ENCODE measurements at regions of chr5 and their contacts with region 1.

Region 1: DNA sequence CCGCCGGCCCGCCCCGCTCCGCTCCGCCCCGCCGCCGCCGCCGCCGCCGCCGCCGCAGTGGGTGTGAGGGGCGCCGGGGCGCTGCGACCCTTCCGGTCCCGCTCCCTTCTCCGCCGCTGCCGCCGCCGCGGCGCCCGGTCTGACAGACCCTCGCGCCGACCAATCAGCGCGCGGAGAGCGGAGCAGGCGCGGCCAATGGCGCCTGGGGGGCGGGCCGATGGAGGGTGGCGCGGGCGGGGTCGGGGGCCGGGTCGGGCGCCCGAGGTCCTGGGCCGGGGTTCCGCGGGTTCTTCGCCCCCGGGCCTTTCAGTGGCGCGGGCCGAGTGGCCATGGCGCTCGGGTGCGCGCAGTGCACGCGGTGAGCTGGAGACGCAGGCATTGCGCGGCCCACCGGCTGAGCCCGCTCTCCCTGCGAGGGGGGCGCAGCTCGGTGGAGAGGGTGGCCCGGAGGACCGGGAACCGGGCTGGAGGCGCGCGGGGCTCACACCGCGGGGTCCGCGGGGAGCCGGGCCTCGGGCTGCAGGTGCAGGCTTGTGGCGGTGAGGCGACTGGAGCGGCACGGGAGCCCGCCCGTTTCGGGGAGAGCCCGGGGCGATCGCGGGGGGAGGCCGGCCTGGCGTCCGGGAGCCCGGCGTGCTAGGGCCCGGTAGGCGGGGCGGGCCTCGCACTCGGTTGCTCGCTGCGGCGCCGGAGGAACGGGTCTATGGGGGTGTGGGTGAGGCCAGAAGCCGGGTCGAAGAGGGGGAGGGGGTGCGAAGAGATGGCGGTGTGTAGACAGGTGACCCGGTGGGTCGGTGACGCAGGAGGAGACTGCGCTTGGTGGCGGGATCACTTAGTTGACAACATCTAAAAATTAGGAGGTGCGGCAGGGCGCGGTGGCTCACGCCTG is at the start of gene MAPK9:
- DNase-seq: peak; percentile 87
- H3K4me3 Mint-ChIP-seq: peak within 1 kb of the TSS; percentile 92
- H3K27ac Mint-ChIP-seq: peak within 1 kb of the TSS; percentile 92
- H3K4me1 Mint-ChIP-seq: peaks cover 29% of the 10 kb centered on the region
- H3K27me3 Mint-ChIP-seq: no peaks in the 10 kb centered on the region
- total RNA-seq, gene MAPK9: 41.7 to 43.2 TPM

Region 2: GRCh38 chr5:179559284-179560252 is 732.6 kb before region 1 on chr5:
- CTCF ChIA-PET with region 1: no interaction called
- POLR2A ChIA-PET with region 1: no interaction called
- intact Hi-C with region 1: loop called (anchors 10 kb)
- DNase-seq: peak; percentile 97
- H3K4me3 Mint-ChIP-seq: peak overlapping the region; percentile 85
- H3K27ac Mint-ChIP-seq: peak overlapping the region; percentile 86
- H3K4me1 Mint-ChIP-seq: peaks cover 17% of the 10 kb centered on the region
- H3K27me3 Mint-ChIP-seq: no peaks in the 10 kb centered on the region

Region 3: GRCh38 chr5:180315762-180316212 is 23.6 kb after region 1 on chr5:
- CTCF ChIA-PET with region 1: interaction called, 155 read pairs
- POLR2A ChIA-PET with region 1: interaction called, 7 read pairs
- intact Hi-C with region 1: loop called (anchors 1 kb)
- DNase-seq: peak; percentile 82
- H3K4me3 Mint-ChIP-seq: peak overlapping the region; percentile 20
- H3K27ac Mint-ChIP-seq: peak overlapping the region; percentile 18
- H3K4me1 Mint-ChIP-seq: peaks cover 2% of the 10 kb centered on the region
- H3K27me3 Mint-ChIP-seq: no peaks in the 10 kb centered on the region

Region 4: DNA sequence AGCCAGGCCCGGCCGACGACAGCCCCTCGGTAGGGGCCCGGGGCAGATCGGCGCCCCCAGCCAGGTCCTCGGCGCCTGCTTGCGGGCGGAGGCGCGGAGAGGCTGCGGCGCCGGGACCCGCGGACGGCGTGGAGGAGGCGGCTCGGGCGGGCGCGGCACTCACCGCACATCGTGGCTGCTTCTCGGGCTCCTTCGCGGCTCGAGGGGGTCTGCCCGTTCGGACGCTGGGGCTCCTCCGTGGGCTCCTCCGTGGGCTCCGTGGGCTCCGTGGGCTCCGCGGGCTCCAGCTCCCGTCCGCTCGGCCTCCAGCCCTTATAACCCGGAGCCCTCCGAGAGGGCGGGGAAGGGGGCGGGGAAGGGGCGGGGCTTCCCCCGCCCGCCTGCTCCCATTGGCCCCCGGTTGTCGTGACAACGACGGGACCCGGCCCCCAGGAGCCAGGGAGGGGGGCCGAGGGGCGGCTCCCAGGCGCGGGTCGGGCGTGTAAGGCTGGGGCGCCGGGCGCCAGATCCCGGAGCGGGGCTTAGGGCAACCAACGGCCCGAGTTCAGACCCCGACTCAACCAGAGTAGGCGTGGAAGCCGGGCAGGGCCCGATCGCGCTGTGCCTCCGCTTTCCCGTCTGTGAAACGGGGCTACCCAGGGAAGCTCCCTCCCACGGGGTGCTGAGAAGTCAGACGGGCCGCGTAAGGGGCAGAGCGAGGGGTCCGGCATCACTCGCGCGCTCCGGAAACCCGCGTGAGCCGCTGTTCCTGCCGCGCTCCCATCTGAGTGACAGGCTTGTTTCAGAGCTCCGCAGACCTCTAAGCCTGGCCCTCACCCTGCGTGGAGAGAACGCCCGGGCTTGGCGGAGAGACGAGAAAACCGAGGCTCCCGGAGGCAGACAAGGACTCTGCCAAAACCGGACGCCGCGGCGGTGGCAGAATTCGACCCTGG is 61.1 kb after region 1 on chr5 and contains the start of gene GFPT2:
- CTCF ChIA-PET with region 1: interaction called, 3 read pairs
- POLR2A ChIA-PET with region 1: no interaction called
- intact Hi-C with region 1: loop called (anchors 1 kb)
- DNase-seq: peak; percentile 81
- H3K4me3 Mint-ChIP-seq: peak within 1 kb of the TSS; percentile 61
- H3K27ac Mint-ChIP-seq: no peak within 1 kb of the TSS
- H3K4me1 Mint-ChIP-seq: peaks cover 1% of the 10 kb centered on the region
- H3K27me3 Mint-ChIP-seq: peaks cover 43% of the 10 kb centered on the region
- total RNA-seq, gene GFPT2: 0.12 to 0.15 TPM

Region 5: DNA sequence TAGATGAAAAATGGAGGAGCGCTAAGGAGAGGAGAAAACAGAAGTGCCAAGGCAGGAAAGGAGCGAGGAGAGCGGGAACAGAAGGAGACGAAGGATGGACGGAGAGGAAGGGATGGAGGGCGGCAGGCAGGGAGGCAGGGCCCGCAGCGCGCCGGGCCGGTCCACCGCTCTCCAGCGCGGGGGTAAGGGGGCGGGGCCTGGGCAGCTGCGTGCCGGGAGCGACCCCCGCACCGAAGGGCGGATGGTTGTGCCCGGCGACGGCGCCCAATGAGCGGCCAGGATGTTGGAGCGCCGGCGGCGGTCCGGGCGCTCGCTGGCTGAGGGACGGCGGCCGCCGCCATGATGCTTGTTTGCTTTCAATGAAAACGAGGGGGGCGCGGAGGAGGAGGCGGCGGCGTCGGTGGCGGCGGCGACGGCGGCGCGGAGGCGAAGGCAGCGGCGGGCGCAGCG is 201.9 kb after region 1 on chr5 and contains the start of gene CNOT6:
- CTCF ChIA-PET with region 1: no interaction called
- POLR2A ChIA-PET with region 1: no interaction called
- intact Hi-C with region 1: loop called (anchors 2 kb)
- DNase-seq: peak; percentile 95
- H3K4me3 Mint-ChIP-seq: peak within 1 kb of the TSS; percentile 84
- H3K27ac Mint-ChIP-seq: peak within 1 kb of the TSS; percentile 82
- H3K4me1 Mint-ChIP-seq: peaks cover 32% of the 10 kb centered on the region
- H3K27me3 Mint-ChIP-seq: no peaks in the 10 kb centered on the region
- total RNA-seq, gene CNOT6: 32.0 to 35.2 TPM

Measured in activated CD4-positive, alpha-beta memory T cell treated with anti-CD3 and anti-CD28 coated beads for 36 hours (primary cell).